ENCODE measurements at regions of chr10 and their contacts with region 1.

Region 1: DNA sequence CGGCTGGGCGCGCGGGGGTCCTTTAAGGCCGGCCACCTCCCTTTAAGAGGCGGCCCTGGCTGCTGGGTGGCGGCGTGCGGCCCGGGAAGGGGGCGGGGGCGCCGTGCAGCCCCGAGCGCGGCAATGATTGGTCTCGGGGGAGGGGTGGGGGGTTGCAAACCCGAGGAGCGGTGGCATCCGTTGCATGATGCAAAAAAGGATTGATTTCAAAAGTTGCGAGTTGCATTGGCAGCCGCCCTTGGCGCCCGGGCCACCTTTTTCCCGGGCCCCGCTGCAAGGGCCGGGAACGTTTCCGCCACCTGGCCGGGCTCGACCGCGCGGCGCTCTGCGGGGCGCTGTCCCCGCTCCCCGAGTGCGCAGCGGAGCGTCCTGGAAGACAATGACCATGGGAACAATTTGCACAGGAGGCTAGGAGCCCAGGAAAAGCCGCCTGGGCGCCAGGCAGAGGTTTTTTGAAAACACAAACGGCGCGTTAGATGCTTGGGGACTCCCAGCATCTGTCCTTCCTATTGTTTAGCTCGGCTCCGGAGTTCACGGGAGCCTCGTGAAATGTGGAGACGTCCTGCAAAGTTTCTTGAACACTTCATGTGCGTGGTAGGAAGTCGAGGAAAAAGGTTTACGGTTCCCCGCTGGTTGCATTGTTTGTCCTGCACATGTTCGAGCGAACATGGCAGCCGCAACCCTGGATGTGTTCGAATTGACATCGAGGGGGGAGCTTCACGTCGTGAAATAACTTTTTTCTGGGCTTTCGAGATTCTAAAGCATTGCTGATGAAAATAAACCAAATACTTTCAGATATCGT is at the start of gene SEPHS1:
- DNase-seq: peak; percentile 77 to 85 (median 78)
- ATAC-seq: peak; percentile 53 to 83 (median 74)
- H3K4me3 ChIP-seq: peak within 1 kb of the TSS; percentile 68 to 93 (median 88)
- H3K27ac ChIP-seq: peak within 1 kb of the TSS; percentile 92 to 98 (median 95)
- H3K4me1 ChIP-seq: peaks cover 0 to 35% (median 22%) of the 10 kb centered on the region in 12 donors
- H3K27me3 ChIP-seq: peaks cover 0 to 23% (median 14%) of the 10 kb centered on the region in 9 donors
- CTCF ChIP-seq: peak in 2 of 12 donors; percentile 21 to 28
- POLR2A ChIP-seq: no peak
- total RNA-seq, gene SEPHS1: 27.5 to 36.7 (median 31.1) TPM

Region 2: DNA sequence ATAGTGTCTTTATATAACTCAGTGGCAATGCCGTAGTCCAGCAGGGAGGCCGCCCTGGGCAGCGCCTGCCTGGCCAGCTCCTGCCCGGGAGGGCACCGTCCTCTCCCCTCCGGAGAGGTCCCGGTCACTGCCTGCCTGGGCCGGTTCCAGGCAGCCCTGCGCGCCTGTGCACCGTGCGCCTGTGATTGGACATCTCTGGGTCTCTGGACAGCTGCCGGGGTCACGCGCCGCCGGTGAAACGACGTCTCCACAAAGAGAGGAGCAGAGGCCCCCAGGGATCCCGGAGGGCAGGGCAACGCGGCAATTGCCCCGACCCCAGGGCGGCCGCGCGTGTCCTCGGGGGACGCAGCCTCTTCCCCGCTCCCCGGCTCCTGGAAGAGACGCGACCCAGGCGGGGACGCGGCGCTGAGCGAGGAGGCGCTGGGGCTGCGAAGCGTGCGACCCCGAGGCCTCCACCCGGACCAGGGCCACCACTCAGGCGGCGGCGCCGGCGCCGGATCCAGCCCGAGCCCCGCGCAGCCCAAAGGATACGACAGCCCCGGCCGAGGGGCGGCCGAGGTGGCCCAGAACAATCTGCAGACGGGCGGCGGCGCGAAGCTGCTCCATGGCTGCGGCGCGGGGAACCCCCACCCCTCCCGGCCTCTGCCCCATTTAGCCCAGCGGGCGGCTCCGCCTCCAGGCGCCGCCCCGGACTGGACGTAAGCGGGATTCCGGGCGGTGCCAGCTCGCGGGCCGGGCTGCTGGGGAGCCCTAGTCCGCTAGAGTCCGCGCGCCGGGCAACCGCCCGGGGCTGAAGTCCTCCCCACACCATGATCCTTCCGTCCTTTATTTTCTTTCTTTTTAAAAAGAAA is 48.8 kb before region 1 on chr10 and contains the start of gene PHYH:
- intact Hi-C with region 1: loop called in 7 of 10 experiments (anchors 1 to 5 kb)
- DNase-seq: peak; percentile 92 to 96 (median 94)
- ATAC-seq: peak; percentile 87 to 95 (median 90)
- H3K4me3 ChIP-seq: peak within 1 kb of the TSS; percentile 59 to 90 (median 78)
- H3K27ac ChIP-seq: peak within 1 kb of the TSS; percentile 96 to 100 (median 100)
- H3K4me1 ChIP-seq: peaks cover 0 to 31% (median 19%) of the 10 kb centered on the region in 12 donors
- H3K27me3 ChIP-seq: no peaks in the 10 kb centered on the region
- CTCF ChIP-seq: peak in 2 of 12 donors; percentile 9 to 10
- POLR2A ChIP-seq: peak; percentile 55 to 96
- total RNA-seq, gene PHYH: 70.9 to 181 (median 157) TPM